ENCODE measurements at regions of chr10 and their contacts with region 1.

Region 1: GRCh38 chr10:32958085-32959005 is at the start of gene ITGB1:
- H3K4me3 Mint-ChIP-seq: peak within 1 kb of the TSS; percentile 97
- H3K27ac Mint-ChIP-seq: peak within 1 kb of the TSS; percentile 98
- H3K4me1 Mint-ChIP-seq: peaks cover 55% of the 10 kb centered on the region
- H3K27me3 Mint-ChIP-seq: no peaks in the 10 kb centered on the region

Region 2: GRCh38 chr10:32773105-32773504 is 185.2 kb before region 1 on chr10:
- intact Hi-C with region 1: no loop called
- H3K4me3 Mint-ChIP-seq: no peak overlapping the region
- H3K27ac Mint-ChIP-seq: no peak overlapping the region
- H3K4me1 Mint-ChIP-seq: no peaks in the 10 kb centered on the region
- H3K27me3 Mint-ChIP-seq: no peaks in the 10 kb centered on the region

Region 3: DNA sequence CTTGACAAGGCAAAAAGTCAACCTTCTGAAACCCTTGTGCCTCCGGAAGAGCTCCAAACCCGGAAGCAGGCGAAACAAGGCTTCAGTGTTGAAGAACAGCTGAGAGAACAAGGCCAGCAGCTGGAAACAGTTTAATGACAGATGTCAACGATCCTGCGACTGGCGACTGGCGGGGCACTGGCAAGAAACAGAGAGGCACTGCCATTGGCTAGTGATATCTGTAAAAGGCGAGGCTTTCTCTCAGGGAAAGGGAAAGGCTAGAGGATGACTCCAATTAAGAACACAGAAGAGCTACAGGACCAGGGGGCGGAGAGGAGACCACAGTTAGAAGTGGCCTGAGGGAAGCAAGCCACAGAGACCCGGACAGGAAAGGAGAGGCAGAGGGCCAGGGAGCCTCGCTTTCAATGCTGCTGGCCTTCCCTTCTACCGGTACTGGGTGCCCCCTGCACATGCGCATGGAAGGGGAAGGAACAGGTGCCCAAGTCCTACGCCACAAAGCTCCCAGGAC is 19.7 kb before region 1 on chr10:
- intact Hi-C with region 1: loop called (anchors 1 kb)
- H3K4me3 Mint-ChIP-seq: peak overlapping the region; percentile 45
- H3K27ac Mint-ChIP-seq: peak overlapping the region; percentile 77
- H3K4me1 Mint-ChIP-seq: peaks cover 55% of the 10 kb centered on the region
- H3K27me3 Mint-ChIP-seq: no peaks in the 10 kb centered on the region

Region 4: DNA sequence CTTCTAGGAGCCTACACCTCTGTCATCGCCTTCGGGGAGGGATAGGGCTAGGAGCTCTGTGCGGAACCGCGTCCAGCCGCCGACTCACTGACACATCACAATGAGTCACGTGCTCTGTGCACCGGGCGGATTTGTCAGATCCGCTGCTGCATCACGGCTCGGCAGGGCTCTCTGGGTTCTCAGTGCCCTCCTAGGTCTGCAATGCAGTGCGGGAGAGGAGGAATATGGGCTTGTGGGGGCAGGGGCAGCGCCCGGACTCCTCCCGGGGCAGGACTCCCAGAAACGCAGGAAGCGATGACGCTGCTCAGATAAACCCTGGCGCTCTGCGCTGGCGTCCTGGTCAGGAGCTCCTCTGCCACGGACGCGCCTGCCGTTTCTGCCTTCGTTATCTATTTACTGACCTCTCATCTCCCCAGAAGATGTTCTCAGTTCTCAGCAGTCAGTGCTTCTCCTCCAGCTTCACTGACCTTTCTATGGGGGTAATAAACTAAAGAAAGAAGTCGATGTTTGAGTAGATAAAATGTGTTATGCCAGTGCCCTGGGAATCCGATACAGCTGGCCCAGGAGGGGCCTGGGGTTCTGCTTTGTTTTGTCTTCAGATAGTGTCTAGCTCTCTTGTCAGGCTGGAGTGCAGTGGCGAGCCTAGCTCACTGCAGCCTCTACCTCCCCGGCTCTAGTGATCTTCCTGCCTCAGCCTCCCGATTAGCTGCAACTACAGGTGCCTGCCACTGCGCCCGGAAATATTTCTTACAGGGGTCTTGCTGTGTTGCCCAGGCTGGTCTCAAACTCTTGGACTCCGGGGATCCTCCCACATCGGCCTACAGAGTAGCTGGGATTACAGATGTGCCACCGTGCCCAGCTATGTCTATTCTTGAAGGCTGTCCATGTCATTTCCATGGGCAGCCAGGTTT is 22.5 kb after region 1 on chr10:
- intact Hi-C with region 1: loop called (anchors 1 kb)
- H3K4me3 Mint-ChIP-seq: peak overlapping the region; percentile 87
- H3K27ac Mint-ChIP-seq: peak overlapping the region; percentile 90
- H3K4me1 Mint-ChIP-seq: peaks cover 29% of the 10 kb centered on the region
- H3K27me3 Mint-ChIP-seq: no peaks in the 10 kb centered on the region

Region 5: DNA sequence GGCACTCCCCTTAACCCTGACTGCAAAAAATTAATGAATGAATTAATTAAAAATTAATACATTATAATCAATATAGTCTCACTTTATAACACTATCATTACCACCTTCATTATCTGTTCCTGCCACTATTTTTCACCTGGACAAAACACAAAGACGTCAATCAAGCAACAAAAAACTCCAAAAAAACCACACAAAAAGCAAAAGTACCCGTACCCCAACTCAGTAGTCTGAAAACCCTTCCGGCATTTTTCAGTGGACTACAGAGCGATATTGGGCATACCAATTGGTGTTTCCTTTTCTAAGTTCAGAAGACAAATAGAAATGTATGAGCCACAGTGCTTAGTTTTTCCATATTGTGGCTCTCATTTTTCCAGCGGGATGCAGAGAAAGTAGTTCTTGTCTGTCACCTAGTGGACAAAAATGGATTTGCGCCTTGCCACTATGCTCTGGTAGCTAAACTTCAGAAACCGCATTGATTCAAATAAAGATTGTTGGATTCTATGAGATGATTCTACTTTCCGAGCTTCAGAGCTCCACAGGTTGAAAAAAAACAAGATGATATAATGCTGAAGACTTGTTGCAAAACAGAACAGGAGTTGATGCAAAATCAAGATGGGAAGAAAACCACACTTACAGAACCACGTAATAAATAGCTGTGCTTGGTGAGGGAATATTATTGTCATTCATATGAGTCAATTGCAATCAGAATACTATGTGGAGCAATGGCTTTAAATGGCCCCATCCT is 50.3 kb after region 1 on chr10:
- intact Hi-C with region 1: loop called (anchors 5 kb)
- H3K4me3 Mint-ChIP-seq: no peak overlapping the region
- H3K27ac Mint-ChIP-seq: no peak overlapping the region
- H3K4me1 Mint-ChIP-seq: peaks cover 23% of the 10 kb centered on the region
- H3K27me3 Mint-ChIP-seq: peaks cover 6% of the 10 kb centered on the region

Region 6: DNA sequence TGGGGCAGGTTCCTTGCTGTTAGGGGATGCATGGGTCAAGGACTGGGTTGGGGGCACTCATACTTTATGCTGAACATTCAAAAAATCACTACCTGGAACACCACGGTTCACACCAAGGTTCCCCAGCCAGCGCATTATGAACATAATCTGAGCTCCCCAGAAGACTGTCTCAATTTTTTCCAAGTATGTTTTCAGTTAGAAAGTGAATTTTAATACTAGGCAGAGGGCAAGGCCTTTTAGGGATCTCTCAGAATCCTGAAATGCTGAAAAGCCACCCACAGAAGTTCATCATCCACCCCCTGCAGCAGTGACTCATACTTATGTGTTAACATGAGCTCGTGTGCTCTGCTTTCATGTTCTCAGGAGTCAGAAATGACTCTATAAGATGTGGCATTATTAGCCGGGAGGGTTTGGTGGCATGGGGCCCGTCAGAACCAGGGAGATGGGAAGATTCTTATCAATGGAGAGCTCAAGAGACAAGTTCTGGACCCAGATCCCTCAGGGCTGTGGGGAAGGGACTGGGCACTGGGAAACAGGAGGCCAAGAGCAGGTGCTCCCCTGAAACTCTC is 184.9 kb after region 1 on chr10:
- intact Hi-C with region 1: no loop called
- H3K4me3 Mint-ChIP-seq: no peak overlapping the region
- H3K27ac Mint-ChIP-seq: no peak overlapping the region
- H3K4me1 Mint-ChIP-seq: no peaks in the 10 kb centered on the region
- H3K27me3 Mint-ChIP-seq: no peaks in the 10 kb centered on the region

Measured in dendritic cell treated with granulocyte-macrophage colony-stimulating factor and Interleukin-4, amounts not matched to agents 40 ng/mL and 50 ng/mL, for 4 days (primary cell).